Calu3 (cell line): ENCODE measurements at regions of chr6 and their contacts with region 1.

Region 1: GRCh38 chr6:17392978-17393891 is at the start of gene CAP2:
- DNase-seq: peak; percentile 49
- H3K4me3 Mint-ChIP-seq: peak within 1 kb of the TSS; percentile 72
- H3K27ac Mint-ChIP-seq: peak within 1 kb of the TSS; percentile 69
- H3K4me1 Mint-ChIP-seq: no peaks in the 10 kb centered on the region
- H3K27me3 Mint-ChIP-seq: no peaks in the 10 kb centered on the region
- CTCF ChIP-seq: no peak
- total RNA-seq, gene CAP2: 14.6 and 15.7 TPM in 2 replicates

Region 2: DNA sequence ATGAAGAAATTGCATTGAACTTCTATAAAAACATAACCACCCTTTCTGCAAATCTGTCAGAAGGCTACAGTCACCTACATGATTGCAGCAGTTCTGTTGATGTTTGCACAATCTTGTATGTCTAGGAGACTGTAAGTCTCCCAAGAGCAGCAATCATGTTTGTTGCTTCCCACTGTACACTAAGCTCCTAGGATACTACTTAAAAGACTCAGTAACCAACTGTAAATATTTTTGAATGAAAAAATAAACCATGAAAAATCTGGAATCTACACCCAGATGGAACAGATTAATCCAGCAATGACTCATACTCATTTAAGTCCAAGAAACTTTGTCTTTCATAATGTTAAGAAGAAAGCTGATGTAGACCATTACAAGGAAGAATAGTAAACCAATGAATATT is 463.4 kb before region 1 on chr6:
- CTCF ChIA-PET with region 1: no interaction called
- intact Hi-C with region 1: no loop called
- DNase-seq: no peak
- H3K4me3 Mint-ChIP-seq: no peak overlapping the region
- H3K27ac Mint-ChIP-seq: no peak overlapping the region
- H3K4me1 Mint-ChIP-seq: no peaks in the 10 kb centered on the region
- H3K27me3 Mint-ChIP-seq: no peaks in the 10 kb centered on the region
- CTCF ChIP-seq: no peak

Region 3: DNA sequence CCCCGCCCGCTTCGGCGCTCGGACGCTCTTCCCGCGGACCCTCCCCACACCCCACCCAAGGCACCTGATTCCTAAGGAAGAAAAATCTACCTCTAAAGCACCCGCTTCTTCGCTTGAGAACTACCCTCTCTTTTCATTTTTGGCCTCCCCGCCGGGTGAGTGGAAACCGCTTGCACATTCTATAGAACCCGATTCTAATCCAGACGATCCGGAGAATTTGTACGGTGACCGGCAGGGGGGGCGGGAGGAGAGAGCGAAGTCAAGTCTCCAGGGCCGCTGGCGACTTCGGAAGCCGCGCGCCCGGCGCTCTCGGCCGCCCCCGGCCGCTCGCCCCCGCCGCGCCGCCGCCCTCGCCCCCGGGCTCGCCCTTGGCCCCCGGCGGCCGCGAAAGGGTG is 112.1 kb before region 1 on chr6 and contains the start of gene RBM24:
- CTCF ChIA-PET with region 1: no interaction called
- intact Hi-C with region 1: loop called (anchors 10 kb)
- DNase-seq: peak; percentile 76
- H3K4me3 Mint-ChIP-seq: peak within 1 kb of the TSS; percentile 84
- H3K27ac Mint-ChIP-seq: no peak within 1 kb of the TSS
- H3K4me1 Mint-ChIP-seq: peaks cover 13% of the 10 kb centered on the region
- H3K27me3 Mint-ChIP-seq: no peaks in the 10 kb centered on the region
- CTCF ChIP-seq: peak; percentile 20
- total RNA-seq, gene RBM24: 0.47 and 1.1 TPM in 2 replicates

Region 4: GRCh38 chr6:17417817-17418216 is 24.6 kb after region 1 on chr6:
- CTCF ChIA-PET with region 1: no interaction called
- intact Hi-C with region 1: no loop called
- DNase-seq: peak; percentile 1
- H3K4me3 Mint-ChIP-seq: no peak overlapping the region
- H3K27ac Mint-ChIP-seq: no peak overlapping the region
- H3K4me1 Mint-ChIP-seq: peaks cover 10% of the 10 kb centered on the region
- H3K27me3 Mint-ChIP-seq: no peaks in the 10 kb centered on the region
- CTCF ChIP-seq: no peak

Region 5: DNA sequence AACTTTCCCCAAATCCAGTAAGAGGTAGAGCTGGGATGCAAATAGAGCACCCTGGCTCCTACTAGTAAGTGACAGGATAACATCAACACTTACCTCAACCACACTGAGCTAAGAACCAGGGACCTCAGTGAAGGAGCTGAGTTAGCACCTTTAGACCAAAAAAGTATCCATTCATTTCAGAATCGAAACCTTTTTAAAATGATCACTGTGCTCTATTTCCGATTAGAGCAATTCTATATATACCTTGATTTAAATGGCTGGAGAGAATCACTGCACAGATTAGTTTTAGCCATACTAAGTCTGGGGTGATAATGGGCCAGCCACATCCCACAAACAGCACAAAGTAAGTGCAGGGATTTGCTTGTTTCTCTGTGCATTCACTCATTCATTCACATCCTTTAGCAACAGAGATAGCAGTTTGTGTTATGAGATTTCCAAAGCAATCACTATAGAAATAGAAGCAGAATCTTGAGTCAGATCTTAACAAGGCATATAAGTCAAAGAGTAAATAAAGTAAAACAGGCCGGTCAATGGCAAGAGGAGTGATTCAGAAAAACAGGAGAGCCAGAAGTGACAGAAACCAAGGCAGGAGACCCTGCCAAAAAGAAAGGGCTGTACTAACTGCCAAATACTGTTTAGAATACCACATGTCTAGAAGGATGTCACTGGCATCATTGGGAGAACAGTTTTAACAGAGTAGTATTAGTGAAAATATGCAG is 457.9 kb after region 1 on chr6:
- CTCF ChIA-PET with region 1: no interaction called
- intact Hi-C with region 1: no loop called
- DNase-seq: no peak
- H3K4me3 Mint-ChIP-seq: no peak overlapping the region
- H3K27ac Mint-ChIP-seq: no peak overlapping the region
- H3K4me1 Mint-ChIP-seq: no peaks in the 10 kb centered on the region
- H3K27me3 Mint-ChIP-seq: no peaks in the 10 kb centered on the region
- CTCF ChIP-seq: no peak